PC-3 (cell line): ENCODE measurements at regions of chr2 and their contacts with region 1.

Region 1: GRCh38 chr2:36376319-36376765 is 20.8 kb downstream of the CRIM1 start:
- DNase-seq: peak; percentile 71
- ATAC-seq: peak; percentile 20
- H3K4me3 ChIP-seq: no peak overlapping the region
- H3K27ac ChIP-seq: peak overlapping the region; percentile 30
- H3K4me1 ChIP-seq: peaks cover 99% of the 10 kb centered on the region
- H3K27me3 ChIP-seq: no peaks in the 10 kb centered on the region
- CTCF ChIP-seq: no peak

Region 2: DNA sequence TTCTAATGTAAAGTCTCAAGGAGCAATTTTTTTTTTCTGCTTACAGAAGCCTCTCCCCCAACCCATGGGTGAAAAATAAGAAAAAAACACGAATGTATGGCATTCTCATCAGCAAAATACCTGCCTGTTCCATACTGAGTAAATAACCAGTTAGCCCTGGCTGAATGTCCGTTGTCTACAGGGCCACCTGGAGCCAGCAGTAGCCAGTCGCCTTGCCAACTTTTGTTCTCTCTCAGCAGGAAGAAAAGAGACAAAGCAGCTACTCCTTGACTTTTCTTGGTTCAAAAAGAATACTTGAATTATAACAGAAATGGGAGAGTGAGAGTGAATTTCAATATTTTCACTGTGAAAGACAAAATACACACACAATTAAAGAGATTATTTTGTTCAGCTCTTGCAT is 553.6 kb before region 1 on chr2:
- CTCF ChIA-PET with region 1: no interaction called
- POLR2A ChIA-PET with region 1: no interaction called
- intact Hi-C with region 1: no loop called
- DNase-seq: no peak
- ATAC-seq: no peak
- H3K4me3 ChIP-seq: no peak overlapping the region
- H3K27ac ChIP-seq: no peak overlapping the region
- H3K4me1 ChIP-seq: no peaks in the 10 kb centered on the region
- H3K27me3 ChIP-seq: peaks cover 54% of the 10 kb centered on the region
- CTCF ChIP-seq: no peak

Region 3: DNA sequence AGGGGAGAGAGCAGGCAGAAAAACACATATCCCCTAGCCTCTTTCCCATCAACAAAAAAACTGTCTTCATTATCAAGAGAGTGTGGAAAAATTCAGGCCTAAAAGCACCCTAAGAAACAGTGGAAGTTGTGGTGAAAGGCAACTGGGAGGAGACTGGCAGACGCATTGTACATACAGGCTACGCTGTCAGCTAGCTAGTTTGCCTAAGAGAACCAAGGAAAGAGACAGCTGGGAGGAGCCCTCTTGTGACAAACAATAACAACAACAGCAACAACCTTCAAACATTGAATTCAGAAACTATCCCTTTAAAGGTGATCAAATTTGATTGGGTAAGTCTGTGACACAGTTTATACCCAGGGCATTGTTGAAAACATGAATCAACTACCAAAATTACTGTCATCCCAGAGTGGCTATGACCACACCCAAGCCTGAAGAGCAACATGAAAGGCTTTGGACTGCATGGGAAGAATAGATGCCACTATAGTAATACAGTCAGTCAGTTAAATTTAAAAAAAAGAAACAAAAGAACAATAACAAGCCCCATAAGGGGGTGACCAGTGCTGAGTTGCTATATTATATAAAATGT is 109.7 kb before region 1 on chr2:
- CTCF ChIA-PET with region 1: no interaction called
- POLR2A ChIA-PET with region 1: no interaction called
- intact Hi-C with region 1: no loop called
- DNase-seq: no peak
- ATAC-seq: no peak
- H3K4me3 ChIP-seq: no peak overlapping the region
- H3K27ac ChIP-seq: no peak overlapping the region
- H3K4me1 ChIP-seq: no peaks in the 10 kb centered on the region
- H3K27me3 ChIP-seq: peaks cover 47% of the 10 kb centered on the region
- CTCF ChIP-seq: no peak

Region 4: DNA sequence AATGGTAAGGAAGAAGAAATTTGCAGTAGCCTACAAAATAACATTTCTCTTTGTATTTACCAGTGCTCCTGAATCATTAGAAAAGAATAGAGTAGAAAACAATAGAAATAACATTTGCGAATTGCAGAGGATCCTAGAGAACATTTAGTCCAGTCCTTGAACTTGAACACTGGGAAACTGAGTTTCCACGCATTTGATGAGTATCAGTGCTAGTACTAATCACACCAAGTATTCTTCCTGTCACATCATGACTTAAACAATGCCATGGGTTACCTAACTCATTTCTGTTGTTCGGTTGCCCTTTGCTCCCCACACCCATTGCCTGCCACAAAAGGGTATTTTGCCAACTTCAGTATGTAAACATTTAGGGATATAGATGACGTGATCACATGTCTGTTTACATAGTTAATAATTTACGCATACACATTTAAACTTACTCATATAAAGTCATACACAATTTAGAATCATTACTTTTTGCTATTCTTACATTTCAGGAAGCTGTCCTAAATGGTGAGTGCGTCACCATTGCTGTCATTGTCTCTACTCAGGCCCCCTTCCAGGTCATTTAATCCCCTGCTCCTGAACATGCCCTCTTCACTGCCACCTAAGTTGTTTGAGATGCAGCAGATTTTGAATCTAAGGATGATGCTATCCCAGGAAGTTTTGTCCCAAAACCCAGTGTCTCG is 21.5 kb after region 1 on chr2:
- CTCF ChIA-PET with region 1: no interaction called
- POLR2A ChIA-PET with region 1: interaction called, 10 read pairs
- intact Hi-C with region 1: loop called (anchors 2 kb)
- DNase-seq: peak; percentile 96
- ATAC-seq: peak; percentile 77
- H3K4me3 ChIP-seq: no peak overlapping the region
- H3K27ac ChIP-seq: peak overlapping the region; percentile 96
- H3K4me1 ChIP-seq: peaks cover 54% of the 10 kb centered on the region
- H3K27me3 ChIP-seq: no peaks in the 10 kb centered on the region
- CTCF ChIP-seq: no peak

Region 5: DNA sequence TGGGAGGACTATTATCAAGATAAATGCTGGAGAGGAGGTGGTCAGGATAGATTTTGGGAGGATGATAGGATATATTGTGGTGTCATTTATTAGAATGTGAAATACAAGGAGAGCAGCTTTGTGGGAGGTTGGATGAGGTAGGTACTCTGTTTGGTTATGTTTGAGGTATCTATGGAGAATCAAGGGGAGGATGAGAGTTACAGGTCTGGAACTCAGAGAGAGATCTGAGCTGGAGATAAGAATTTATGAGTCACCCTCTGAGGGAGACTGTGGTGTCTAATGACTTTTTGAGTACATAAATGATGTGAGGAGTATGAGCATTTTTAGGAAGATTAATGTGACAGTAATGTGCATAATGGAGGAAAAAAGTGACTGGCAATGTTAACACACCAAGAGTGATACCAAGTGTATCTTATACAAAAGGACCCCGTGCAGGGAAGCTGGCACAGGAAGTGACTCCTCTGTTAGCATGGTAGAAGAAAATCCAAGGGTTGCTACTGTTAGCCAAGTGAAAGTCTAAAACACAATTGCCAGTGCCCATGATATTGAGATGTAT is 27.4 kb after region 1 on chr2:
- CTCF ChIA-PET with region 1: no interaction called
- POLR2A ChIA-PET with region 1: interaction called, 3 read pairs
- intact Hi-C with region 1: loop called (anchors 2 kb)
- DNase-seq: peak; percentile 99
- ATAC-seq: peak; percentile 90
- H3K4me3 ChIP-seq: peak overlapping the region; percentile 54
- H3K27ac ChIP-seq: peak overlapping the region; percentile 97
- H3K4me1 ChIP-seq: peaks cover 38% of the 10 kb centered on the region
- H3K27me3 ChIP-seq: no peaks in the 10 kb centered on the region
- CTCF ChIP-seq: no peak

Region 6: GRCh38 chr2:36433311-36434217 is 57.2 kb after region 1 on chr2:
- CTCF ChIA-PET with region 1: no interaction called
- POLR2A ChIA-PET with region 1: no interaction called
- intact Hi-C with region 1: loop called (anchors 5 kb)
- DNase-seq: peak; percentile 37
- ATAC-seq: peak; percentile 27; the same call in 1 of the 2 replicates
- H3K4me3 ChIP-seq: no peak overlapping the region
- H3K27ac ChIP-seq: no peak overlapping the region
- H3K4me1 ChIP-seq: peaks cover 12% of the 10 kb centered on the region
- H3K27me3 ChIP-seq: no peaks in the 10 kb centered on the region
- CTCF ChIP-seq: no peak

Region 7: DNA sequence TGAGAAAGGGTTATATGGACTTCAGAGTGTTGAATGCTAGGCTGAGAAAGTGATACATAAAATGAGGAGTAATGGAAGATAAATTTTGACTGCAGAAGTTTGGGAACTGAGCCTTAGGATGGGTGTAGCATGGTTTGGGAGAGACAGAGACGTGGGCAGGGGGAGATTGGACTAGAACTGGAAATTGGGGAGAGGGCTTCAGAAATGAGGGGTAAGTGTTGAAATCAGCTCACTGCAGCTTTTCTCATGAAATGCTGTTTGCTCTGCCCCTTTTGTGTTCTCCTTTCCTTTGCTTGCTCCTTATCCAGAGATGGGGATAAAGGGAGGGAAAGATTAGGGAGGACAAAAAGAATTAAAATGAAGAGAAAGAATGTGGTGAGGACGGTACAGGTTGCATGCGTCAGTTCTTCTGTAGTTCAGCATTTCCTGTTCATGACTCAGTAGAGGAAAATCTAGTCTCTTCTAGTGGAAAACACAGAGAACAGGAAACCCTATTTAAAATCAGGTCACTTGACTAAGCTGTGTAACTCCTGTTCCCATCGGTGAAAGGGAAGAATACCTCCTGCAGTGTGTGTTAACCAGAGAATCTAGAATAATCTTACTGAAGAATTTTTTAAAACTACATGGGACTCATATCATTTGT is 84.8 kb after region 1 on chr2:
- CTCF ChIA-PET with region 1: no interaction called
- POLR2A ChIA-PET with region 1: interaction called, 3 read pairs
- intact Hi-C with region 1: loop called (anchors 5 kb)
- DNase-seq: peak; percentile 92
- ATAC-seq: peak; percentile 91
- H3K4me3 ChIP-seq: peak overlapping the region; percentile 22; the same call in 1 of the 2 replicates
- H3K27ac ChIP-seq: peak overlapping the region; percentile 81
- H3K4me1 ChIP-seq: peaks cover 36% of the 10 kb centered on the region
- H3K27me3 ChIP-seq: no peaks in the 10 kb centered on the region
- CTCF ChIP-seq: no peak

Region 8: DNA sequence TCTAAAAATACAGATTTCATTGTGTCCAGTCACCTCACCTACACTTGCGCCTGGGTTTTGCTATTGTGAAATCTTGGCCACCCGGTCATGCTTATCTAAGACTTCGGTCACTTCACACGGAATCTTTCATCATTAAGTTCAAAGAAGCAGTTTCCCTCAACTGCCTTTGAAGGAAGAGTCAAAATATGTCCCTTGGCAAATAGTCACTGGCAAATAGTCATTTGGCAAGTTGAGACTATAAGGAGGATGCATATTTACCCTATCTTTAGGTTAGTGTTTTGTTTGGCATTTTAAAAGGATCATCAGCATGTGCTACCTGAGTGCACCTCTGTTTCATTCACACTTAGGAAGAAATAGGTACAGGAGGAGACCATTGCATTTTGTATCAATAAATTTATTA is 125.7 kb after region 1 on chr2:
- CTCF ChIA-PET with region 1: no interaction called
- POLR2A ChIA-PET with region 1: no interaction called
- intact Hi-C with region 1: no loop called
- DNase-seq: no peak
- ATAC-seq: no peak
- H3K4me3 ChIP-seq: no peak overlapping the region
- H3K27ac ChIP-seq: no peak overlapping the region
- H3K4me1 ChIP-seq: peaks cover 27% of the 10 kb centered on the region
- H3K27me3 ChIP-seq: no peaks in the 10 kb centered on the region
- CTCF ChIP-seq: no peak